ENCODE measurements at regions of chr16 and their contacts with region 1.

Region 1: GRCh38 chr16:53054670-53055485 is at the start of gene CHD9:
- DNase-seq: peak; percentile 83
- H3K4me3 ChIP-seq: peak within 1 kb of the TSS; percentile 46 to 82 (median 72)
- H3K27ac ChIP-seq: peak within 1 kb of the TSS; percentile 54
- H3K4me1 ChIP-seq: peaks cover 24% of the 10 kb centered on the region
- H3K27me3 ChIP-seq: no peaks in the 10 kb centered on the region
- CTCF ChIP-seq: peak; percentile 82 to 99
- total RNA-seq, gene CHD9: 49.2 to 53.2 TPM

Region 2: GRCh38 chr16:52953215-52953614 is 101.7 kb before region 1 on chr16:
- CTCF ChIA-PET with region 1: no interaction called
- dilution Hi-C with region 1: no loop called
- in situ Hi-C with region 1: no loop called
- intact Hi-C with region 1: no loop called
- DNase-seq: no peak
- H3K4me3 ChIP-seq: no peak overlapping the region
- H3K27ac ChIP-seq: no peak overlapping the region
- H3K4me1 ChIP-seq: no peaks in the 10 kb centered on the region
- H3K27me3 ChIP-seq: no peaks in the 10 kb centered on the region
- CTCF ChIP-seq: no peak

Region 3: DNA sequence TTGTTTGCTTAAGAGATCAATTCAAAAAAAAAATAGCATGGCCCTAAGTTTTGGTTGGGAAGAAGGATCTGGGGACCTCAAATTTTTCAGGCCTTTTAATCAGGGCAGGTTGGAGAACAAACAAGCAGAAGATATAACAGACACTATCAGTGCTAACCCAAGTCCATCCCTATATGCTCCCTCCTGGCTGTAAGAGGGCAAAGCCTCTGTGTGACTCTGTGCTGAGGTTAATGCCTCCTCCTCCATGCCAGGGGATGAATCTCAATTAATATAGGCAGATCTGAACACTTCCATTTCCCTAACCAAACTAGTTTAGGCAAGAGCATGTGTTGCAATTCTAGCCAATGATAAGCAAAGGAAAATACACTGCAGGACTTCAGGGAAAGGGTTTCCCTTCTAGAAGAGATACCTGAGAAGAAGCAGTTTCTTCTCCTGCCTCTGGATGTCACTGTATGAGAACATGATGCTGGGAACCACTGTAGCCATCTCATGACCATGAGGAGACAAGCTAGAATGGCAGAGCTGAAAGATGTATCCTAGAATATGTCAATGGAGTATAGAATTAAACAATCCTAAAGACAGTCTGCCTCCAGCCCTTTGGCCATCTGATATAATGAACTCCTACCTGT is 78.2 kb before region 1 on chr16:
- CTCF ChIA-PET with region 1: no interaction called
- dilution Hi-C with region 1: no loop called
- in situ Hi-C with region 1: no loop called
- intact Hi-C with region 1: loop called (anchors 2 kb)
- DNase-seq: peak; percentile 52
- H3K4me3 ChIP-seq: no peak overlapping the region
- H3K27ac ChIP-seq: no peak overlapping the region
- H3K4me1 ChIP-seq: no peaks in the 10 kb centered on the region
- H3K27me3 ChIP-seq: no peaks in the 10 kb centered on the region
- CTCF ChIP-seq: peak; percentile 59 to 75

Region 4: GRCh38 chr16:53041320-53042051 is 13.4 kb before region 1 on chr16:
- CTCF ChIA-PET with region 1: interaction called, 10 read pairs
- dilution Hi-C with region 1: no loop called
- in situ Hi-C with region 1: no loop called
- intact Hi-C with region 1: no loop called
- DNase-seq: peak; percentile 90
- H3K4me3 ChIP-seq: peak overlapping the region; percentile 7 to 35 (median 26)
- H3K27ac ChIP-seq: peak overlapping the region; percentile 50
- H3K4me1 ChIP-seq: peaks cover 45% of the 10 kb centered on the region
- H3K27me3 ChIP-seq: no peaks in the 10 kb centered on the region
- CTCF ChIP-seq: no peak

Region 5: DNA sequence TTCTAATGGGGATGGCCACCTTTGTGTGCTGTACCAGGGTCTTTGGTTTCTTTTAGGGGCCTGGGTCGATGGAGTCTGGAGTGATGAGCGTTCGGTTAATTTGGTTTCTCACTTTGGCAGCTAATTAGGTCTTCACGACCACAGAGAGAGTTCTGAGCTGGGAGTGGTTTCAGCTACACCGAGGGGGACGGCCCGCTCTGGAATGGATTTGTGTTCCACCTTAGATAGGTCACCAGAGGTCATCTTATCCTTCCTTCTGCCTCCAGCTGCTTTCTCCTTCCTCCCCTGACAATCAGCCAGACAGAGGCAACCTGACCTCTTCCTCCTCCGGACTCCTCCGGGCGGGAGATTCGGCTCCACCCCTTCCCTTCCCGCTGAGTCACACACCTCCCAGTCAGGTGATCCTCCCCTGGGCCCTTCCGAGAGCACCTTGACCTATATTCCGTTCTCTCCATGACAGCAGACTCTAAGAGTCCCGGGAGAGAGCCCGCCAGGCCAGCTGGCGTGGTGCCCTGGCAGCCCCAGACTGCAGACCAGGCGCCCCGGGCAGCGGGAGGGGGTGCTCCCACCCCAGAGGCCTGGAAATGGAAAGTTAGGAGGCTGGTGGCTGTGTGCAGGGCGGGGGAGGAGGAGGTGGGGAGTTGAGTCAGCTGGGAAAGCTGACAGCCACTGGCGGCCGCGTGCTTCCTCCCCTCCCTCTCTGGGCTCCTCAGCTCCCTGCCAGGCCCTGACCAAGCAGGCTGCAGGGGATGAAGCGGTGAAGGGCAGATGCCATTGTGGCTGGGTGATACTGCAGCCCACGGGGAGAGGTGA is 44.6 kb after region 1 on chr16:
- CTCF ChIA-PET with region 1: no interaction called
- dilution Hi-C with region 1: no loop called
- in situ Hi-C with region 1: no loop called
- intact Hi-C with region 1: loop called (anchors 1 kb)
- DNase-seq: peak; percentile 98
- H3K4me3 ChIP-seq: peak overlapping the region; percentile 24 to 53 (median 36)
- H3K27ac ChIP-seq: peak overlapping the region; percentile 91
- H3K4me1 ChIP-seq: peaks cover 26% of the 10 kb centered on the region
- H3K27me3 ChIP-seq: no peaks in the 10 kb centered on the region
- CTCF ChIP-seq: peak in 1 of 2 donors; percentile 3

Region 6: DNA sequence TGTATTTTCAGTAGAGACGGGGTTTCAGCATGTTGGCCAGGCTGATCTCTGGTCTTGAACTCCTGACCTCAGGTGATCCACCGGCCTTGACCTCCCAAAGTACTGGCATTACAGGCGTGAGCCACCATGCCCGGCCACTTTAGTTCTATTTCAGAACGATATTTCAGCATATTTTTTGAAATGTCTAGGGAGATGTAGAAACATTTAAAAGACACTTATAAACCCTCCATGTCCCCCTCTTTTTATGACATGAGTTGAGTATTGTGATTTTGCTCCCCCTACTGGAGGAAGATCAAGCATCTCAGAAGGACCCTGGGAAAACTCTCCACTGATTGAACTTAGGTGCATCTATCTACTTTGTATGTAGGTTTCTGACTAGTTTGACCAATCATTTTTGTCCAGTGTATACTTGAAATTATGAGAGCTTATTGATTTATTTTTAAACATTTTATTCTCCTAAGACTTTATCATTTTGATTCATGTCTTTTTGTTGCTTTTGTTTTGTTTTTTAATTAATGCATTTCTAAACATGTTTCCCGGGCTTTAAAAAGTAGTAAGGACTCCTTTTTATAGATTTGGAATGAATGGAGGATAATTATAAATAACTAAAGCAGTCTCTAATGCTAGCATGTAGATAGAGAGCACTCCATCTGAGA is 105.0 kb after region 1 on chr16:
- CTCF ChIA-PET with region 1: no interaction called
- dilution Hi-C with region 1: no loop called
- in situ Hi-C with region 1: loop called in 1 of 2 experiments (anchors 10 kb)
- intact Hi-C with region 1: loop called (anchors 1 kb)
- DNase-seq: peak; percentile 32
- H3K4me3 ChIP-seq: no peak overlapping the region
- H3K27ac ChIP-seq: no peak overlapping the region
- H3K4me1 ChIP-seq: no peaks in the 10 kb centered on the region
- H3K27me3 ChIP-seq: no peaks in the 10 kb centered on the region
- CTCF ChIP-seq: peak; percentile 64 to 70

Region 7: DNA sequence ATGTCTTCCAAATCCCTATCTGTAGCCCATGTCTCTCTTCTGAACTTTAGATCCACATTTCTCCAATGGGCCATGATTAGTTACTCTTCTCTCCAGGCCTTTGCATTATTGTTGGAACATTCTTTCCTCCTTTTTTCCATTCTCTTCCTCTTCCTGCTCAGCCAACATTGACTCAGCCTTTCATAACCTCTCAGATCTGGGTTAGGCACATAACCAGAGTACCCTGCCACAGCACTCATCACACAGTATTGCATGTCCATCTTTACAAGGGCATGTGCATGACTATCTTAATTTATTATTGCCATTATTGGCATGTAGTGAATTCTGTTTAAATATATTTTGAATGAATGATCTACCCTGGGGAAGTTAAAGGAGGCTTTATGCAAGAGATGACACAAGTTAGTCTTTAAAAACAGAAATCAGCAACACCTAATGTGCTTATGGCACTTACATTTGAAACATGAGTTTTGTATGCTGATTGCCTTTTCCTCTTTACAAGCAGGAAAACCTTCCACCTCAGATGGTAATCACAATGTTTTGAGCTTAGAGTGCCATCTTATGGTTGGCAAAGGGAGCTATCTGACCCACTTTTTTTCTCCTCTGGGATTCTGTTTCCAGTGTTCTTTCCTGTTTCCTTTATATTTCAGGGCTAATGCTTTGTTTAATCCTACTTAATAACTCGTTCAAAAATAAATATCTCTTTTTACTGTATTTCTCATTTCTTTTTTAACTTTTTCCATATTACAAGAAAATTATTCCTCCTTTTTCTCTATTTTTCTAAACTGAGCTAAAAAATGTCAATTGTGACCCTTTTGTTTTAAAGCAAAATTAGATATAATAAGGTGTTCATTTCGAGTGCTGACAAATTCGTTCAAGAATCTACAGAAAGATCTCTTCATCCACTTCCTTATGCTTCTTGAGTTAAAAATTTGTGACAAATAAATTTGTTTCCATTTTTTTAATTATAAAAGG is 228.4 kb after region 1 on chr16:
- CTCF ChIA-PET with region 1: no interaction called
- dilution Hi-C with region 1: no loop called
- in situ Hi-C with region 1: no loop called
- intact Hi-C with region 1: loop called (anchors 1 kb)
- DNase-seq: peak; percentile 38
- H3K4me3 ChIP-seq: no peak overlapping the region
- H3K27ac ChIP-seq: no peak overlapping the region
- H3K4me1 ChIP-seq: no peaks in the 10 kb centered on the region
- H3K27me3 ChIP-seq: no peaks in the 10 kb centered on the region
- CTCF ChIP-seq: peak; percentile 64 to 69

Region 8: DNA sequence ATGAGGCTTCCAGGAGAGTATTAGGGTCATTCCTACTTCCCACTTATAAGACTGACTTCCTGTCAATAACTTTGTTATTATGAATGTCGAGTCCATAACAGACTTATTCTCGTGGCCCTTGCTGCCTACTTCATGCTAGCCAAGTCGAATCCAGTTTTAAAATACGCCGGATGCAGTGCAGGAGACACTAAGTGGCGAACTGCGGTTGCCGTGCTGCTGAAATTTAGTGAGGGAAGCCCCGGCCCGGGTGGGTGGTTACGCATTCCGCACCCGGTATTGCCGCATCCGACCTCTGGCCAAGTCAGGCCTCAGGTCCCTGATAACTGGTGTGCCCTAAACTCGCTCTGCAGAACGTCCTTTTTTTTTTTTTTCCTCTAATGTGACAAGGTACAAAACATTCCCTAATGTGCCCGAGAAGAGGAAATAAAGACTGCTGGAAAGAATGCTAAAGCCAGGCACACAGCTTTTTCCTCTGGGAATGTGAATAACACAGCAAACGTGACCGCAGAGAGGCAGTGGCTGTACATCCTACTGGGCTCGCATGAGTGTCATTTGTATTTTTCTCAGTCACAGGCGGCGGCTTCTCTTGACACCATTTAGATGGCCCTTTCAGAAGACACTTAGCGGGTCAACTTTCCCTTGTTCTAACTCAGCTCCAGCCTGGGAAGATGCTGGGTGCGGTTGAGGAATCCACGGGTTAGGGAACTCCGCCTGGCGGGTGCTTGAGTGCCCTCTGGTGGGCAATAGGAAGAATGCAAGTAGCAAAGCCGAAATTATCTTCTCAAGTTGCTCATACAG is 455.2 kb after region 1 on chr16:
- CTCF ChIA-PET with region 1: no interaction called
- dilution Hi-C with region 1: no loop called
- in situ Hi-C with region 1: no loop called
- intact Hi-C with region 1: loop called (anchors 2 kb)
- DNase-seq: peak; percentile 39
- H3K4me3 ChIP-seq: no peak overlapping the region
- H3K27ac ChIP-seq: no peak overlapping the region
- H3K4me1 ChIP-seq: no peaks in the 10 kb centered on the region
- H3K27me3 ChIP-seq: no peaks in the 10 kb centered on the region
- CTCF ChIP-seq: peak; percentile 93 to 97

Measured in mammary epithelial cell (primary cell).